Activated CD4-positive, alpha-beta memory T cell treated with anti-CD3 and anti-CD28 coated beads for 36 hours (primary cell): ENCODE measurements at regions of chr21 and their contacts with region 1.

Region 1: GRCh38 chr21:15275615-15276200 is 210.9 kb upstream of the NRIP1 start:
- DNase-seq: no peak
- H3K4me3 Mint-ChIP-seq: no peak overlapping the region
- H3K27ac Mint-ChIP-seq: no peak overlapping the region
- H3K4me1 Mint-ChIP-seq: no peaks in the 10 kb centered on the region
- H3K27me3 Mint-ChIP-seq: no peaks in the 10 kb centered on the region

Region 2: DNA sequence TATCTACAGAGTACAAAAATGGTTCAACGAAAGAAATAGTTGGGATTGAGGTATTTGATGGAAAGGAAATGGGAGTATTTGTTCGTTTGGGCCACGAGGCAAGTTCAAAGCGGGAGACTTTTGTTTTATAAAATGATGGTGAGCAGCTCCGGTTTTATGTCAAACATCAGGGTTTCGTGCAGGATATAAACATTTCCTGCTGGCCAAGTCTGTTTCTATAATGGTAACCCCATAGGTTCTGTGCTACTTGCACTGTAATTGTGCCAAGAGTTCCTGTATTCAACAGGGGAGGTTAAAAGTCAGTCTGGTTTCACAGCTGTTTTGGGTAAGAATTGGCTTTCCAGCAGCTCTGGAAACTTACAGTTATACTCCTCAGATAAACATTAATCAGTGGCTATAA is 79.4 kb after region 1 on chr21:
- CTCF ChIA-PET with region 1: no interaction called
- POLR2A ChIA-PET with region 1: no interaction called
- intact Hi-C with region 1: loop called (anchors 10 kb)
- DNase-seq: no peak
- H3K4me3 Mint-ChIP-seq: no peak overlapping the region
- H3K27ac Mint-ChIP-seq: no peak overlapping the region
- H3K4me1 Mint-ChIP-seq: peaks cover 3% of the 10 kb centered on the region
- H3K27me3 Mint-ChIP-seq: no peaks in the 10 kb centered on the region